ENCODE measurements at regions of chr11 and their contacts with region 1.

Region 1: DNA sequence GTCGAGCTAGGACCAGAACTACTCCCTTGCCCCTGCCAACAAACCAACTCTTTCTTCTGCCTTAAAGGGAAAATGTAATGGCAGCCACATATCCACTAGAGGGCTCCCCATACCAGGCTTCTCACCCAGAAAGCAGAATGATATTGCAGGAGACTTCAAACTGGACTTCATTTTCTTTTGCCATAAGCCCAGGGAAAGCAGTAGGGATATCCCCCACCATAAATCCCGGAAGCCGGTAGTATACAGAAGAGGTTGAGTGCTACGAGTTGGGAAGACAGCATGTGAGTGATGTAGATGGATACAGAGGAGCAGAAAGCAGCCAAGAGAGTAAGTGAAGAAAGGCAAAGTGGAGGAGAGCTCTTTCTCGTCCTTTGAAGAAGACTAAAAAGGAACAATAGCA is 12.1 kb downstream of the PLAAT5 start:
- DNase-seq: peak; percentile 60
- ATAC-seq: peak; percentile 69
- H3K4me3 Mint-ChIP-seq: no peak overlapping the region
- H3K27ac Mint-ChIP-seq: no peak overlapping the region
- H3K4me1 Mint-ChIP-seq: no peaks in the 10 kb centered on the region
- H3K27me3 Mint-ChIP-seq: peaks cover 4% of the 10 kb centered on the region

Region 2: GRCh38 chr11:63395697-63396096 is 83.2 kb before region 1 on chr11:
- CTCF ChIA-PET with region 1: no interaction called
- POLR2A ChIA-PET with region 1: no interaction called
- intact Hi-C with region 1: no loop called
- DNase-seq: no peak
- ATAC-seq: no peak
- H3K4me3 Mint-ChIP-seq: no peak overlapping the region
- H3K27ac Mint-ChIP-seq: no peak overlapping the region
- H3K4me1 Mint-ChIP-seq: no peaks in the 10 kb centered on the region
- H3K27me3 Mint-ChIP-seq: peaks cover 57% of the 10 kb centered on the region

Region 3: DNA sequence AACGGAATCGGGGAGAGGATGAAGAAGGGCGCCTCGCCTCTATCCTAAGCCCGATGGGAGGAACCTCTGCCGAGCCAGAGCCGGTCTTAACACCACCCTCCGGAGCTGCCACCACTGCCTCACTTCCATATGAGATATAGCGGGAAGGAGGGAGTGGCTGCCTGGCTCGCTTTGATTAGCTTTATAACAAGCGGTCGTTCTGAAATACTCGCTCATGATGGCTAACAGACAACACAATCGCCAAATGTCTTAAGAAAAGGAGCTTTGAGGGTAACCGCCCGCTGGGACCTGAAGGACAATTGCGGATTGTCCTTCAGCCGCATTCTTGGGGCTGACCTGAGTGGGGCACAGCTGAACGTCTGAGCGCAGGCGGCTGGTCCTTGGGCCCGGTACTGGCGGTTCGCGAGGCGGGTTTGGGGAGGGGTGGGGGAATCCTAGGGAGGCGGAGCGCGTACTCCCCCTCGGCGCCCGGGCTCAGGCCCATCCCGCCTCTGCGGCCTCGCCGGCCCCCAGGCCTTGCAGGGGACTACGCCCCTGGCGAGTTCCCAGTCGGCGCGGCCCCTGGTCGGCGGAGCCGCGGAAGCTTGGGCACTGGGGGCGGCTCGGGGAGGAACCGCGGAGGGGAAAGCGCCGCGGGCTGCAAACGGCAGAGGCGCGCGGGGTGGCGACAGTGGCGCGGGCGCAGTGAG is 11.8 kb after region 1 on chr11 and contains the start of gene PLAAT5:
- CTCF ChIA-PET with region 1: interaction called, 19 read pairs
- POLR2A ChIA-PET with region 1: no interaction called
- intact Hi-C with region 1: no loop called
- DNase-seq: peak; percentile 32
- ATAC-seq: peak; percentile 39
- H3K4me3 Mint-ChIP-seq: peak within 1 kb of the TSS; percentile 62
- H3K27ac Mint-ChIP-seq: no peak within 1 kb of the TSS
- H3K4me1 Mint-ChIP-seq: peaks cover 11% of the 10 kb centered on the region
- H3K27me3 Mint-ChIP-seq: peaks cover 22% of the 10 kb centered on the region
- total RNA-seq, gene PLAAT5: 0.07 TPM in 1 of 2 experiments, not detected in the other

Region 4: GRCh38 chr11:63621931-63622782 is 143.3 kb after region 1 on chr11:
- CTCF ChIA-PET with region 1: interaction called, 29 read pairs
- POLR2A ChIA-PET with region 1: no interaction called
- intact Hi-C with region 1: no loop called
- DNase-seq: no peak
- ATAC-seq: no peak
- H3K4me3 Mint-ChIP-seq: no peak overlapping the region
- H3K27ac Mint-ChIP-seq: no peak overlapping the region
- H3K4me1 Mint-ChIP-seq: peaks cover 6% of the 10 kb centered on the region
- H3K27me3 Mint-ChIP-seq: no peaks in the 10 kb centered on the region

Region 5: GRCh38 chr11:63629426-63629825 is 150.5 kb after region 1 on chr11:
- CTCF ChIA-PET with region 1: interaction called, 125 read pairs
- POLR2A ChIA-PET with region 1: no interaction called
- intact Hi-C with region 1: no loop called
- DNase-seq: no peak
- ATAC-seq: no peak
- H3K4me3 Mint-ChIP-seq: no peak overlapping the region
- H3K27ac Mint-ChIP-seq: no peak overlapping the region
- H3K4me1 Mint-ChIP-seq: peaks cover 15% of the 10 kb centered on the region
- H3K27me3 Mint-ChIP-seq: no peaks in the 10 kb centered on the region

Measured in activated CD4-positive, alpha-beta T cell treated with anti-CD3 and anti-CD28 coated beads for 36 hours (primary cell).